ENCODE measurements at regions of chr1 and their contacts with region 1.

Region 1: GRCh38 chr1:172745014-172745413 is 86.1 kb downstream of the FASLG start:
- DNase-seq: peak; percentile 91
- H3K4me3 Mint-ChIP-seq: peak overlapping the region; percentile 42
- H3K27ac Mint-ChIP-seq: peak overlapping the region; percentile 86
- H3K4me1 Mint-ChIP-seq: peaks cover 42% of the 10 kb centered on the region
- H3K27me3 Mint-ChIP-seq: no peaks in the 10 kb centered on the region
- CTCF ChIP-seq: peak; percentile 85

Region 2: GRCh38 chr1:172770071-172770470 is 25.1 kb after region 1 on chr1:
- CTCF ChIA-PET with region 1: interaction called, 14 read pairs
- POLR2A ChIA-PET with region 1: no interaction called
- intact Hi-C with region 1: no loop called
- DNase-seq: no peak
- H3K4me3 Mint-ChIP-seq: no peak overlapping the region
- H3K27ac Mint-ChIP-seq: no peak overlapping the region
- H3K4me1 Mint-ChIP-seq: no peaks in the 10 kb centered on the region
- H3K27me3 Mint-ChIP-seq: no peaks in the 10 kb centered on the region
- CTCF ChIP-seq: no peak

Region 3: GRCh38 chr1:172851077-172851476 is 106.1 kb after region 1 on chr1:
- CTCF ChIA-PET with region 1: no interaction called
- POLR2A ChIA-PET with region 1: no interaction called
- intact Hi-C with region 1: no loop called
- DNase-seq: no peak
- H3K4me3 Mint-ChIP-seq: no peak overlapping the region
- H3K27ac Mint-ChIP-seq: no peak overlapping the region
- H3K4me1 Mint-ChIP-seq: no peaks in the 10 kb centered on the region
- H3K27me3 Mint-ChIP-seq: no peaks in the 10 kb centered on the region
- CTCF ChIP-seq: no peak

Region 4: GRCh38 chr1:172926070-172926469 is 181.1 kb after region 1 on chr1:
- CTCF ChIA-PET with region 1: interaction called, 10 read pairs
- POLR2A ChIA-PET with region 1: no interaction called
- intact Hi-C with region 1: no loop called
- DNase-seq: no peak
- H3K4me3 Mint-ChIP-seq: no peak overlapping the region
- H3K27ac Mint-ChIP-seq: no peak overlapping the region
- H3K4me1 Mint-ChIP-seq: peaks cover 28% of the 10 kb centered on the region
- H3K27me3 Mint-ChIP-seq: no peaks in the 10 kb centered on the region
- CTCF ChIP-seq: no peak

Region 5: DNA sequence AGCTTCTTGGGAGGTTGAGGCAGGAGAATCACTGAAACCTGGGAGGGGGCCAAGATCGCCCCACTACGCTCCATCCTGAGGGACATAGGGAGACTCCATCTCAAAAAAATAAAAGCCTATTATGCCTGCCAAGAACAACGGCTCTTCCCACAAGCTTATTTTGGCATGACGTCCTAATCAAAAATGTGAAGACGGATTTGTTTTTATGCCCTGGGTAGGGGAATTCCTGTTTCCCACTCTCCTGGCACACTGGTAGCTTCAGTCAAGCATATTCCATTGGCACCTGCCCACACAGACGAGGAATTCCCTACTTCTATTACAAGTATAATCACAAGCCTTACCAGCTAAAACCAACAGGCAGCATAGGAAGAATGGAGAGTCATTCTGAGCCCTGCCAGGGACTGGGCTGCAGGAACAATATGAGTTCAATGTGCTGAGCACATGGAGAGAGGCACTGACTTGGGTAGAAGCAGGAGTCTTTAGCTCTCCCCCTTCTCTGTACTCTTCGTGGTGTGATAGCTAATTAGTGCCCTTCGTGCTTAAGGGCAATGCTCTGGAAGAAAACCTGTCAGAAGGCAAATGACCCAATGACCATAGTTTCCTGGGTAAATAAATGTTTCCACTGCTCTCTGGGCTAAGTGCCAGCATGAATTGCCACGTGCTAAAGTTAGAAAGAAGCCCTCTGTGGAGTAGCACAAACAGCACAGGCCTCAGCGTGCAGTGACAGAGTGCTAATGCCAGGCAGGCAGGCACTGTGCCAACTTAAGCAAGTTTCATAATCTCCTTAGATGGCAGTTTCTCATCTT is 445.3 kb after region 1 on chr1:
- CTCF ChIA-PET with region 1: interaction called, 590 read pairs
- POLR2A ChIA-PET with region 1: interaction called, 8 read pairs
- intact Hi-C with region 1: no loop called
- DNase-seq: peak; percentile 100
- H3K4me3 Mint-ChIP-seq: peak overlapping the region; percentile 44
- H3K27ac Mint-ChIP-seq: peak overlapping the region; percentile 93
- H3K4me1 Mint-ChIP-seq: peaks cover 29% of the 10 kb centered on the region
- H3K27me3 Mint-ChIP-seq: no peaks in the 10 kb centered on the region
- CTCF ChIP-seq: no peak

Region 6: DNA sequence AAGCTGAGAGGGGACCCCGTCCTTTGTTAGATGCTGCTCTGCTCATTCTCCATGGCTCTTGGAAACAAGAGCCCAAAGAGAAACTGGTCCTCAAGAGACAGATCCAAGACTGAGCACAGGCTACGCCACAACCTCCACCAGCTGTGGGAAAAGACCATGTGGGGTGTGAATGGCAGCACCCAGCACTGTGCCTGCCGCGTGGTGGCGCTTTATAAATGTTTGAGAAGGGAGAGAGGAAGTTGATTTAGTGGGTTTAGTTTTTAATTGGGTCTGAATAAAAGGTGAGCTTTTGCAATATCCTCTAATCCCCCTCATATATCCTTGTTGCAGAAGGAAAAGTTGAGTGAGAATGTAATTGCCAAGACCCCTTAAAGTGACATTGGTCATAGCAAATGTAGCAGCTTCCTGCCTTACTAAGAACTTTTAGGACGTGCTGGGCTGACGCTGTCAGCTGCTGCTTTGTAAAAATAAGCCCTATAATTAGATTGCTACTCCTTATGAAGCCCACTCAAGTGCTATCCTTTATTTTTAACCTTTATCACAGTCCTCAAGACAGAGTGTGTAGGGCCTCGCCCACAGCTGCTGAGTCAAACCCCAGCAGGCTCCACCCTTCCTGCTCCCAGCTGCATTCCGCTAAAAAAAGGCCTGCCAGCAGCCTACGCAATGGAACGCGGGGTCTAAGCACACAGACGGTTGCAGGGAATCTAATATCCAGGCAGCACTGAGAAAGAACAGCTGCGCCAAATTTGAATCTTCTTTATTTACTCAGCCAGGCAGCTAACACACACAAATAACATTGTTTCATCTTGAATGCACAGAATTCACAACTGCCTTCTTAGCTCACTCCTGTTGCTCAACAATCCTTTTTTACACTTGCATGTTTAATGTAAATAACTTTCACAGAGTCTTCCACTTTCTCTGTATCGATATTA is 684.7 kb after region 1 on chr1:
- CTCF ChIA-PET with region 1: interaction called, 25 read pairs
- POLR2A ChIA-PET with region 1: interaction called, 3 read pairs
- intact Hi-C with region 1: loop called (anchors 1 kb)
- DNase-seq: peak; percentile 91
- H3K4me3 Mint-ChIP-seq: peak overlapping the region; percentile 60
- H3K27ac Mint-ChIP-seq: peak overlapping the region; percentile 93
- H3K4me1 Mint-ChIP-seq: peaks cover 43% of the 10 kb centered on the region
- H3K27me3 Mint-ChIP-seq: no peaks in the 10 kb centered on the region
- CTCF ChIP-seq: peak; percentile 39

Region 7: GRCh38 chr1:174217787-174218574 is 1473.0 kb after region 1 on chr1:
- CTCF ChIA-PET with region 1: interaction called, 10 read pairs
- POLR2A ChIA-PET with region 1: interaction called, 5 read pairs
- intact Hi-C with region 1: no loop called
- DNase-seq: peak; percentile 61
- H3K4me3 Mint-ChIP-seq: no peak overlapping the region
- H3K27ac Mint-ChIP-seq: no peak overlapping the region
- H3K4me1 Mint-ChIP-seq: peaks cover 6% of the 10 kb centered on the region
- H3K27me3 Mint-ChIP-seq: no peaks in the 10 kb centered on the region
- CTCF ChIP-seq: peak; percentile 90